IMR-90 (cell line): ENCODE measurements at regions of chr16 and their contacts with region 1.

Region 1: GRCh38 chr16:23729503-23730424 is 16.7 kb upstream of the ERN2 start:
- DNase-seq: peak; percentile 48
- ATAC-seq: peak; percentile 53
- H3K4me3 ChIP-seq: no peak overlapping the region
- H3K27ac ChIP-seq: no peak overlapping the region
- H3K4me1 ChIP-seq: no peaks in the 10 kb centered on the region
- H3K27me3 ChIP-seq: no peaks in the 10 kb centered on the region
- CTCF ChIP-seq: no peak
- POLR2A ChIP-seq: no peak
- RAD21 ChIP-seq: no peak

Region 2: DNA sequence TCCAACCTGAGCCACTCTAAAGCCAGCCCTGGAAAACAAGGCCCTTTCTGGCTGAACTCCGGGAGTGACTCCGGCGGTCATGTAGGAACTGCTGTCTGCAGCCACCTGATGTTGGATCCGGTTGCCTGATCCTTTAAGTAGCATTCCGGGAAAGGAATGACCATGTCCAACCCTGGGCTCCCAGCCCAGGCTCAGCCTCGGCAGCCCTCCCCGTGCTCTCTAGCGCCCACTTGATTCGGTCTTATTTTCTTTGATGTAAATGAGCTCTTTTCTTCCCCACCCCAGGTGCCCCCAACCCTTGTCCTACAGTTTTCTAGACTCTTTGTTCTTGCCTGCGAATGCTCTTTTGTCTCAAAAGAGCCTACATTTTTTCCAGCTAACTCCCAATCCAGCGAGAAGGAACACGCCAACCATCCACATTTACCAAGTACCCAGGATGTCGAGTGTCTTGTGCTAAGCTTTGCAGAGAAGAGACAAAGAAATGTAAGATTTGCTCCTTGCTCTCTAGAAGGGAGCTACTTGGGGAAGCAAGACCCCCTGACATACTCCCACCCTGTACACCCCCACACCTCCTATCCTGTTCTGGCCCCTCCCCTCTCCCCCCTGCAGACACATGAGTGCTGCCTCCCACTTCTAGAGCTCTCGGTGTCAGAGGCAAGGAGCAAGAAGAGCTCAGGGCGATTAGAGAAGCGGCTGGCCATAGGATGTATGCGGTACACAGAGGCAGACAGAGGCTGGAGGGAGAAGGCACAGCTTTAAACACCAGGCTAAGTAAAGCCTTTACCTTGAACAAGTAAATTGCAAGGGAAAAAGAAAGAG is 330.6 kb before region 1 on chr16:
- CTCF ChIA-PET with region 1: no interaction called
- POLR2A ChIA-PET with region 1: no interaction called
- dilution Hi-C with region 1: no loop called
- in situ Hi-C with region 1: no loop called
- intact Hi-C with region 1: no loop called
- DNase-seq: no peak
- ATAC-seq: 0 out of 2 replicates have a peak, but pooled peaks have one; percentile 17
- H3K4me3 ChIP-seq: no peak overlapping the region
- H3K27ac ChIP-seq: no peak overlapping the region
- H3K4me1 ChIP-seq: no peaks in the 10 kb centered on the region; the same call in 1 of the 2 replicates
- H3K27me3 ChIP-seq: no peaks in the 10 kb centered on the region
- CTCF ChIP-seq: no peak
- POLR2A ChIP-seq: no peak
- RAD21 ChIP-seq: no peak

Region 3: DNA sequence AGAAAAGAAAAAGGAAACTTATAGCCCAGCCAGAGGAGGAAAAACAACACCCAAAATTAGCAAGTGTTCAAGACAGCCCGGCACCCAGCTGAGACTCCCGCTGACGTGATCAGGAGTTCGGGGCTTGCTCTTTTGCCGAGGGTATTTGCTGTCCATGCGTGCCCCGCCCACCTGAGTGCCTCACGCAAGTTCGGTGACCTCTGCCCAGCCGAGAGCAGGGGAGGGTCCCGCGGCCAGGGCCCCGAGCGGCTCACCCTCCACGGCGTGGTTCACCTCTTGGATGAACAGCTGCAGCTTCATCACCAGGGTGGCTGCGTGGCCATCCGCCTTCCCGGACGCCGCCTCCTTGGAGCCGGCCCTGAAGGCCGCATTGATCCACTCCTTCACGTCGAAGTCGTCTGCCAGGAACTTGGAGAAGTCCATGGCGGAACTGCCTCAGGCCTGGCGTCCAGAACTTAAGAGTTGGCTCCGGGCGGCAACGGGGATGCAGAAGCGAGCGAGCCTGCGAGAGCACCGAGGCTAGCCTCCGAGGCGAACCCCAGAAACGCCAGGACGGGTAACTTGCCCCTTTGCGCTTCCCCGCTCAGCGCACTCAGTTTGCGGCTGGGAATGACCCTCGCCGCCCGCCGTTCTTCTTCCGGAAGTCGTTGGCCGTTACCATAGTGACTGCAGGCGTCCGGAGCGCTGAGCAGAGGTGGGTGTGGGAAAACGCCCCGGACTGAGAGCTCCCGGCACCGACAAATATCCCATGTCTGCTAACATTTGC is 277.0 kb before region 1 on chr16 and contains the start of gene COG7:
- CTCF ChIA-PET with region 1: no interaction called
- POLR2A ChIA-PET with region 1: no interaction called
- dilution Hi-C with region 1: no loop called
- in situ Hi-C with region 1: no loop called
- intact Hi-C with region 1: no loop called
- DNase-seq: peak; percentile 86
- ATAC-seq: peak; percentile 89
- H3K4me3 ChIP-seq: peak within 1 kb of the TSS; percentile 92
- H3K27ac ChIP-seq: peak within 1 kb of the TSS; percentile 100
- H3K4me1 ChIP-seq: no peaks in the 10 kb centered on the region
- H3K27me3 ChIP-seq: no peaks in the 10 kb centered on the region
- CTCF ChIP-seq: no peak
- POLR2A ChIP-seq: no peak
- RAD21 ChIP-seq: no peak
- total RNA-seq, gene COG7: 25.6 and 28.5 TPM in 2 replicates

Region 4: GRCh38 chr16:23663918-23664317 is 65.8 kb before region 1 on chr16:
- CTCF ChIA-PET with region 1: no interaction called
- POLR2A ChIA-PET with region 1: no interaction called
- dilution Hi-C with region 1: no loop called
- in situ Hi-C with region 1: no loop called
- intact Hi-C with region 1: no loop called
- DNase-seq: no peak
- ATAC-seq: no peak
- H3K4me3 ChIP-seq: no peak overlapping the region
- H3K27ac ChIP-seq: no peak overlapping the region
- H3K4me1 ChIP-seq: peaks cover 11% of the 10 kb centered on the region
- H3K27me3 ChIP-seq: no peaks in the 10 kb centered on the region
- CTCF ChIP-seq: no peak
- POLR2A ChIP-seq: no peak
- RAD21 ChIP-seq: no peak

Region 5: GRCh38 chr16:23678430-23679273 is 51.1 kb before region 1 on chr16 and contains the start of gene PLK1:
- CTCF ChIA-PET with region 1: no interaction called
- POLR2A ChIA-PET with region 1: no interaction called
- dilution Hi-C with region 1: no loop called
- in situ Hi-C with region 1: no loop called
- intact Hi-C with region 1: loop called (anchors 2 kb)
- DNase-seq: peak; percentile 76
- ATAC-seq: peak; percentile 93
- H3K4me3 ChIP-seq: peak within 1 kb of the TSS; percentile 50
- H3K27ac ChIP-seq: peak within 1 kb of the TSS; percentile 64
- H3K4me1 ChIP-seq: peaks cover 19% of the 10 kb centered on the region
- H3K27me3 ChIP-seq: no peaks in the 10 kb centered on the region
- CTCF ChIP-seq: peak; percentile 50
- POLR2A ChIP-seq: no peak
- RAD21 ChIP-seq: peak; percentile 44
- total RNA-seq, gene PLK1: 19.4 and 20.0 TPM in 2 replicates

Region 6: GRCh38 chr16:23801378-23801777 is 71.6 kb after region 1 on chr16:
- CTCF ChIA-PET with region 1: no interaction called
- POLR2A ChIA-PET with region 1: no interaction called
- dilution Hi-C with region 1: no loop called
- in situ Hi-C with region 1: no loop called
- intact Hi-C with region 1: no loop called
- DNase-seq: peak; percentile 51
- ATAC-seq: peak; percentile 92
- H3K4me3 ChIP-seq: no peak overlapping the region
- H3K27ac ChIP-seq: no peak overlapping the region
- H3K4me1 ChIP-seq: no peaks in the 10 kb centered on the region
- H3K27me3 ChIP-seq: no peaks in the 10 kb centered on the region
- CTCF ChIP-seq: peak; percentile 72
- POLR2A ChIP-seq: no peak
- RAD21 ChIP-seq: peak; percentile 68